ENCODE measurements at regions of chr14 and their contacts with region 1.

Region 1: GRCh38 chr14:70359181-70360090 is at the start of gene COX16:
- DNase-seq: peak; percentile 79 to 94
- H3K4me3 ChIP-seq: peak within 1 kb of the TSS; percentile 80
- H3K27ac ChIP-seq: peak within 1 kb of the TSS; percentile 69
- H3K4me1 ChIP-seq: peaks cover 15% of the 10 kb centered on the region; the same call in 1 of the 2 replicates
- H3K27me3 ChIP-seq: no peaks in the 10 kb centered on the region
- CTCF ChIP-seq: no peak
- total RNA-seq, gene COX16: 73.9 and 87.0 TPM in 2 replicates

Region 2: DNA sequence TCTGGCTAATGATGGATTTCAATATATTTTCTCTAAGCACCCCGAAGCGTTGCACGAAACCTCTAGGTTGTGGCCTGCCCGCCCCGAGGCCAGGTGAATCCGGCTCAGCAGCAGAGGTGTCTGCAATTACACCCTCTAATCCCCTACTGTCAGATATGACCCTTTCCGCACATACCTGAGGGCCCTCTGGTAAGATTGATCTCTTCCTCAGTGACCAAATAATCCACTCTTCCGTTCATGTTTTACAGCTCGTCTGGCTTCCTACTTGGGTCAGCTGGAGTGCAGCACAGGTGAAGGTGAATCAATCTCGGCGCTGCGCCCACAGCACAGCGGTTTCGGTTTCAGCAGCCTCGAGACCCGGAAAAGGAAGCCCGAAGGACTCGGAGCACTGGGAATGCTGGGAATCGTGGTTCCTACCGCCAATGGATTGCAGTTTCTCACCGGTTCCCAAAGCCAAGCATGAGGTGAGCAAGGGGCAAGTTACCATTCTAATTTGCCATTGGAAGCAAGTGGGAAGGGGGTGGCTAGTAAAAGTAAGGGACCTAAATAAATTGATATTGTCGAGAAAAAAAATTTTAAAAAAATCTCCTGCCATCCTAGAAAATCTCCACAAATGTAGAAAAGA is 57.4 kb after region 1 on chr14 and contains the start of gene SYNJ2BP:
- CTCF ChIA-PET with region 1: no interaction called
- POLR2A ChIA-PET with region 1: no interaction called
- intact Hi-C with region 1: loop called (anchors 1 kb)
- DNase-seq: peak; percentile 80 to 87
- H3K4me3 ChIP-seq: peak within 1 kb of the TSS; percentile 77
- H3K27ac ChIP-seq: peak within 1 kb of the TSS; percentile 71
- H3K4me1 ChIP-seq: peaks cover 15% of the 10 kb centered on the region
- H3K27me3 ChIP-seq: no peaks in the 10 kb centered on the region
- CTCF ChIP-seq: no peak
- total RNA-seq, gene SYNJ2BP: 21.2 and 30.2 TPM in 2 replicates

Region 3: DNA sequence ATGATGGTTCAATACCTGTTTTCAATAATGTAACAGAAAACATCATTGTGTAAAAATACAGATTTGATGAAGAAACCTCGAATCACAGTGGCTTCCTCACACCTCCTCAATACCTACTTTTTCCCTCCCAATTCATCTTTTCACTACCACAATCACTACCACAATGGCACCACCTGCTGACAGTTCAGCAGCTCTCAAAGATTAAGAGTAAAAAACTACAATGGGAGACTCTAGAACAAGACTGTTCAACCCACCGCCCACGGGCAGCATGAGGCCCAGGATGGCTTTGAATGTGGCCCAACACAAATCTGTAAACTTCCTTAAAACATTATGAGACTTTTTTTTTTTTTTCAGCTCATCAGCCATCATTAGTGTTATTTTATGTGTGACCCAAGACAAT is 225.8 kb after region 1 on chr14:
- CTCF ChIA-PET with region 1: no interaction called
- POLR2A ChIA-PET with region 1: interaction called, 14 read pairs
- intact Hi-C with region 1: no loop called
- DNase-seq: no peak
- H3K4me3 ChIP-seq: no peak overlapping the region
- H3K27ac ChIP-seq: no peak overlapping the region
- H3K4me1 ChIP-seq: no peaks in the 10 kb centered on the region
- H3K27me3 ChIP-seq: no peaks in the 10 kb centered on the region
- CTCF ChIP-seq: no peak

Measured in PC-9 (cell line).